Left cardiac atrium (tissue), 4 donors: ENCODE measurements at regions of chr17 and their contacts with region 1.

Region 1: DNA sequence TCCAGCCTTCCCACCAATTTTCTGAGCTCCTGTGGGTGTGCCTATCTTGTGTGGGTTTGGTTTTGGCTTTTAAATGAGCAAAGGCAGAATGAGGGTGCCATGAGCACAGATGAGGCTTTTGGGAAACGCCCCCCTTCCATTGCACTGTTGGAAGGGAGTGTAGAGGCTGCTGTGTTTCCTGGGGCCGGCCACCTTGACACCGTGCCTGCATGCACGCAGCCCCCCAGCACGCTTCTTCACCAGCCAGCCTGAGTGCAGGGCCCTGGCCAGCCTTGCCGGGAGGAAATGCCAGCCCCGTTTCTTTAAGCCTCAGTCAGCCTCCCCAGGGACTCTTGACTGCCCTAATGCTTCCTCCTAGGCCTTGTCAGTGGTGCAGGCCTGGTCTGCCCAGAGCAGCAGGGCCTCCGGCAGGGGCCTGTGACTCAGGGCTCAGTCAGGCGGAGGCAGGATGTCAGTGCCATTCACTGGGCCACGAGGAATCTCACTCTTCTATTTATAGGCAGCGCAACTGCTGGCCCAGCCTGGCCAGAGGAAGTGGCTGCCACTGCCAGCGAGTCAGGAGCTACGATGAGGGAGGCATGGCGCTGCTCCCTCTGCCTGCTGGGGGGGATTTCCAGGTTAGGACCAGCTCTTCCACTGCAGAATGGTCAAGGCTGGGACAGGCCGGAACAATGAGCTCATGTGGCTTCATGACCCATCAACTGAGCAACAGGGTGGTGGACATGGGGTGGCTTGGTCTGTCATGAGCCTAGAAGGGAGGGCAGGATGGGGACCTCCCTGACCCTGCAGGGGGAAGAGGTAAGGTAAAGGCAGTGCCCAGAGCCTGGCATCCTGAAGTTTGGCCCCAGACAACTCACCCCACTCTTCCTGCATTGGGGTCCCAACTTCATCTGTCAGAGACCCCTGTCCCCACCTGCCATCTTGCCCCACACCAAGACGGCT is 205.2 kb downstream of the RAB11FIP4 start:
- DNase-seq: peak; percentile 76
- ATAC-seq: peak; percentile 92 to 97

Region 2: DNA sequence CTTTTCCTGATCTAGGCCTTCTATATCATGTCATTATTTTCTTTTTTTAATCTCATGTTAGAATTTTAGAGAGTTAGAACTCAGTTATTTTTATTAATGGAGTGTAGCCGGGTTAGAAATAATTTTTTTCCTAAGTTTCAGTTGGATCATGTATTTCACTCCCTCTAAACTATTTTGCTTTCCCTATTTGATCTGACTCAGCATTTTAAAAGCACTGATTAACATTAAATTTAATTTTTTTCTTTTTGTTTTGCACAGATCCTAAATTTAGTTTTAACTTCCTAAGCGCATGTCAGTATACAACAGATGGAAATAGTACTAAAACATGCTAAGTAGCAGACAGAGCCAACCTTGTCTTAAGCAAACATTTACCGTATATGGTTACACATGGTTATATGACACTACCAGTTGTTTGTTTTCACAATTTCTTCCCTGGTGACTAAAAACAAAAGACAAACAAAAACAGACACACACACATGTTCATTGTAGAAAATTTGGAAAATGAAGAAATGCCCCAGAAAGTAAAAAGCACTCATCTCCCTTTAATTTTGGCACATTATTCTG is 238.7 kb before region 1 on chr17:
- intact Hi-C with region 1: no loop called
- DNase-seq: no peak
- ATAC-seq: no peak

Region 3: DNA sequence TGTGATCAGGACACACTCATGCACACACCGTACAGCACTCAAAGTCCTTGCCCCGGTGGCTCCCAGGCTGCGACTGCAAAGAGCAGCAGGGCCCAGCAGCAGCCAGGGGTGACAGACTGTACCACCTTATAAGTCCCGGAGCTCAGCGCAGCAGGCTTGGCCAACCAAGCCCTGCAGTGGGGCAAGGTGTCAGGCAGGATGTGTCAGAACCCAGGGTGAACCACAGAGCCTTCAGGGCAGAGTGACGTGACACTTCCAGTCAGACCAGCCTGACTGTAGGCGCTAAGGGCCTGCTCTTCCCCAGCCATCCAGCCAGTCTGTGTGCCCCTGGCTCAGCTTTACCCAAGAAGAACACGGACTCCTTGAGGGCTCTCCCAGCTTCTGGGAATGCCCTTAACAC is 58.3 kb after region 1 on chr17:
- intact Hi-C with region 1: loop called in 1 of 2 experiments (anchors 5 kb)
- DNase-seq: peak; percentile 64
- ATAC-seq: peak; percentile 94 to 98